Tibial artery (tissue), 4 donors: ENCODE measurements at regions of chr9 and their contacts with region 1.

Region 1: GRCh38 chr9:127714951-127715393 is 491 bp downstream of the PTRH1 start:
- DNase-seq: no peak
- H3K4me3 ChIP-seq: peak overlapping the region; percentile 72 to 78
- H3K27ac ChIP-seq: peak overlapping the region; percentile 81
- H3K4me1 ChIP-seq: peaks cover 0 to 20% (median 18%) of the 10 kb centered on the region in 4 donors
- H3K27me3 ChIP-seq: no peaks in the 10 kb centered on the region
- CTCF ChIP-seq: no peak

Region 2: GRCh38 chr9:127611899-127612790 is 102.8 kb before region 1 on chr9 and contains the start of gene STXBP1:
- intact Hi-C with region 1: loop called (anchors 5 kb)
- DNase-seq: peak; percentile 81 to 92
- H3K4me3 ChIP-seq: peak within 1 kb of the TSS; percentile 70 to 75
- H3K27ac ChIP-seq: peak within 1 kb of the TSS; percentile 73 to 85
- H3K4me1 ChIP-seq: peaks cover 0 to 34% (median 15%) of the 10 kb centered on the region in 4 donors
- H3K27me3 ChIP-seq: no peaks in the 10 kb centered on the region
- CTCF ChIP-seq: no peak